Activated B cell treated with CpG ODN at 0.5 μM for 24 hours (primary cell): ENCODE measurements at regions of chr1 and their contacts with region 1.

Region 1: GRCh38 chr1:70190180-70190579 is 15.2 kb downstream of the LRRC40 start:
- DNase-seq: no peak
- ATAC-seq: no peak
- H3K4me3 Mint-ChIP-seq: no peak overlapping the region
- H3K27ac Mint-ChIP-seq: no peak overlapping the region
- H3K4me1 Mint-ChIP-seq: no peaks in the 10 kb centered on the region
- H3K27me3 Mint-ChIP-seq: no peaks in the 10 kb centered on the region
- CTCF ChIP-seq: no peak

Region 2: GRCh38 chr1:69752831-69753230 is 437.3 kb before region 1 on chr1:
- CTCF ChIA-PET with region 1: no interaction called
- POLR2A ChIA-PET with region 1: no interaction called
- intact Hi-C with region 1: no loop called
- DNase-seq: no peak
- ATAC-seq: no peak
- H3K4me3 Mint-ChIP-seq: no peak overlapping the region
- H3K27ac Mint-ChIP-seq: no peak overlapping the region
- H3K4me1 Mint-ChIP-seq: no peaks in the 10 kb centered on the region
- H3K27me3 Mint-ChIP-seq: no peaks in the 10 kb centered on the region
- CTCF ChIP-seq: no peak

Region 3: DNA sequence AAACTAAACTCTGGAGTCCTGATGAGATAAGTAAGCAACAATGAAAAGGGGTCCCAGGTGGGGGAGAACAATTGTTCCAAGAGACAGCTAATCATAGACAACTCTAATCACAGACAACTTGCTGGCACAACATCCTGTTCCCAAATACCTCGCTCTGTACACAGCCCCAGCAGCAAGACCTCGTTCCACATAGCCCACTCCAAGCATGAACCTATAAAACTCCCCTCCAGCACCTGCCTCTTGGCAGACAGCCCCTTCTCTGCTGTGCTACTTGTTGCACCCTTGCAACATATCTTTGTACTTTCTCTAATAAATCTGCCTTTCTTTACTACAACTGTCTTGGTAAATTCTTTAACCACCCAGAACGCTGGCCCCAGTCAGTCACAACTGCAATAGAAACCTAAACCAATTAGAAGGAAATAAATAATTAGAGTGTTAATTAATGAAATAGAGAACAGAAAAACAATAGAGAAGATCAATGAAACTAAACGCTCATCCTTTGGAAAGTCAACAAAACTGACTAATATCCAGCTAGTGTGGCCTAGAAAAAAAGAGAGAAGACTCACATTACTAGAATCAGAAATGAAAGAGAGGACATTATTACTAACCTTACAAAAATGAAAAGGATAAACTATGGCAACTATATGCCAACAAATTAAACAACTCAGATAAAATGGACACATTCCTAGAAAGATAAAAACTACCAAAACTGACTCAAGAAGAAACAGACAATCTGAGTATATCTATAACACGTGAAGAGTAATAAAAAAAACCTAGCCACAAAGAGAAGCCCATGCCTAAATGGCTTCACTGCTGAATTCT is 21.0 kb before region 1 on chr1:
- CTCF ChIA-PET with region 1: no interaction called
- POLR2A ChIA-PET with region 1: no interaction called
- intact Hi-C with region 1: loop called (anchors 2 kb)
- DNase-seq: no peak
- ATAC-seq: no peak
- H3K4me3 Mint-ChIP-seq: no peak overlapping the region
- H3K27ac Mint-ChIP-seq: no peak overlapping the region
- H3K4me1 Mint-ChIP-seq: no peaks in the 10 kb centered on the region
- H3K27me3 Mint-ChIP-seq: no peaks in the 10 kb centered on the region
- CTCF ChIP-seq: no peak